CD8-positive, alpha-beta T cell (primary cell): ENCODE measurements at regions of chr9 and their contacts with region 1.

Region 1: GRCh38 chr9:130682490-130683121 is 11.0 kb upstream of the EXOSC2 start:
- DNase-seq: peak in 8 of 9 experiments; percentile 42 to 74 (median 60)
- ATAC-seq: peak; percentile 37
- H3K4me3 ChIP-seq: peak overlapping the region; percentile 61 to 63
- H3K4me3 Mint-ChIP-seq: peak overlapping the region; percentile 92
- H3K27ac ChIP-seq: no peak overlapping the region
- H3K27ac Mint-ChIP-seq: no peak overlapping the region
- H3K4me1 ChIP-seq: peaks cover 8% of the 10 kb centered on the region
- H3K4me1 Mint-ChIP-seq: peaks cover 2% of the 10 kb centered on the region
- H3K27me3 ChIP-seq: peaks cover 5 to 7% of the 10 kb centered on the region in 2 experiments
- H3K27me3 Mint-ChIP-seq: peaks cover 13% of the 10 kb centered on the region
- CTCF ChIP-seq: peak; percentile 88

Region 2: DNA sequence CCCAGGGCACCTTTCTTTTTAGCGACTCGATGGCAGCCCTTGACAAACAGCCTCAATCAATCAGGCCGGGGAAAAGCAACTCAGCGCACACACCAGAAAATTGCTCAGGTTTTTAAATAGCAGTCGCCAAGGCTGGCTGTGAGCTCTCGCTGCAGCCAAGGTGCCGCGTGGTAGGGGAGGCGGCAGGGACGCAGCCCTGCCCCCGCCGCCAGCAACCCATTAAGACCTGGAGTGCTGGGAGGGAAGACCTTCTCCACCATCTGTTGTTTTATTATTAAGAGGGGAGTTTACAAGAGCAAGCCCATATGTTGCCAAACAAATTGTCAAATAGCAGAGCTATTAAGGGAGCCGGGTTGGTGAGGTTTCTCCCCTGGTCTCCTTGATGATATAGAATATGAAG is 215.2 kb before region 1 on chr9:
- CTCF ChIA-PET with region 1: interaction called, 101 read pairs
- POLR2A ChIA-PET with region 1: no interaction called
- intact Hi-C with region 1: no loop called
- DNase-seq: no peak
- ATAC-seq: no peak
- H3K4me3 ChIP-seq: no peak overlapping the region
- H3K4me3 Mint-ChIP-seq: no peak overlapping the region
- H3K27ac ChIP-seq: no peak overlapping the region
- H3K27ac Mint-ChIP-seq: no peak overlapping the region
- H3K4me1 ChIP-seq: no peaks in the 10 kb centered on the region
- H3K4me1 Mint-ChIP-seq: no peaks in the 10 kb centered on the region
- H3K27me3 ChIP-seq: peaks cover 3 to 8% of the 10 kb centered on the region in 2 experiments
- H3K27me3 Mint-ChIP-seq: peaks cover 37% of the 10 kb centered on the region
- CTCF ChIP-seq: no peak

Region 3: DNA sequence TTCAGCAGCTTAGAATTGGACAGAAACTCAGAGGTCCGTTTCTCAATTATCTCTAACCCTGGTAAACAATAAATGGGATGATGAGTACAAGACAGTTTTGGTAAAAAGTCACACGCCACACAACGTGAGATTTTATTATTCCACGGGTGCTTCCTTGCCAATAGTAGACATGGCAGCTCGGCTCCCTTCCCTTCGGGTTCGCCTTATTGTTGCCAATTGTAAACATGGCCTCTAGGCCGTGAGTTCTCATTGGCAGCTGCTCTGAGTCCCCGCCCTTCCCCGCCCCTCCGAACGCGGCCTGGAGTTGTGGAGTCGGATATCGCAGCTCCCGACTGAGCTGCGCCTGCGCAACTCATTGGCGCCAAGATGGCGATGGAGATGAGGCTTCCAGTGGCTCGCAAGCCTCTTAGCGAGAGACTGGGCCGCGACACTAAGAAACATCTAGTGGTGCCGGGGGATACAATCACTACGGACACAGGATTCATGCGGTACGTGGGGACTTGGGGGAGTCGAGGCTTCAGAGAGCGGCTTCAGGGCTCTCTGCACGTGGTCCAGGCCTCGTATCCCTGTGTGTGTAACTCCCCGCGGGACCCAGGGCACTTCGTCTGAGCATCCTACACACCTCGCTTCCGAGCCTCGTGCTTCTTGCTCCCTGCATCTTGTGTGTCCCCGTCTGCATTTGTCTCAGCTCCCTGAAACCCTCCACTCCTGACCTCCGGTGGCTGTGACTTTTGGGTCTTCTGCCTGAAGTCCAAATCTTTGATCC is 11.0 kb after region 1 on chr9 and contains the start of gene EXOSC2:
- CTCF ChIA-PET with region 1: interaction called, 18 read pairs
- POLR2A ChIA-PET with region 1: interaction called, 12 read pairs
- intact Hi-C with region 1: no loop called
- DNase-seq: peak; percentile 96 to 100 (median 97)
- ATAC-seq: peak; percentile 99
- H3K4me3 ChIP-seq: peak within 1 kb of the TSS; percentile 88 to 97
- H3K4me3 Mint-ChIP-seq: peak within 1 kb of the TSS; percentile 93
- H3K27ac ChIP-seq: peak within 1 kb of the TSS; percentile 73 to 78
- H3K27ac Mint-ChIP-seq: peak within 1 kb of the TSS; percentile 95
- H3K4me1 ChIP-seq: peaks cover 25% of the 10 kb centered on the region
- H3K4me1 Mint-ChIP-seq: peaks cover 39% of the 10 kb centered on the region
- H3K27me3 ChIP-seq: no peaks in the 10 kb centered on the region
- H3K27me3 Mint-ChIP-seq: no peaks in the 10 kb centered on the region
- CTCF ChIP-seq: no peak
- total RNA-seq, gene EXOSC2: 59.1 to 59.9 TPM

Region 4: GRCh38 chr9:130707225-130707976 is 24.8 kb after region 1 on chr9:
- CTCF ChIA-PET with region 1: interaction called, 29 read pairs
- POLR2A ChIA-PET with region 1: interaction called, 3 read pairs
- intact Hi-C with region 1: no loop called
- DNase-seq: peak; percentile 18 to 83 (median 77)
- ATAC-seq: peak; percentile 48
- H3K4me3 ChIP-seq: no peak overlapping the region
- H3K4me3 Mint-ChIP-seq: no peak overlapping the region
- H3K27ac ChIP-seq: no peak overlapping the region
- H3K27ac Mint-ChIP-seq: no peak overlapping the region
- H3K4me1 ChIP-seq: no peaks in the 10 kb centered on the region
- H3K4me1 Mint-ChIP-seq: peaks cover 3% of the 10 kb centered on the region
- H3K27me3 ChIP-seq: no peaks in the 10 kb centered on the region
- H3K27me3 Mint-ChIP-seq: no peaks in the 10 kb centered on the region
- CTCF ChIP-seq: peak; percentile 93

Region 5: DNA sequence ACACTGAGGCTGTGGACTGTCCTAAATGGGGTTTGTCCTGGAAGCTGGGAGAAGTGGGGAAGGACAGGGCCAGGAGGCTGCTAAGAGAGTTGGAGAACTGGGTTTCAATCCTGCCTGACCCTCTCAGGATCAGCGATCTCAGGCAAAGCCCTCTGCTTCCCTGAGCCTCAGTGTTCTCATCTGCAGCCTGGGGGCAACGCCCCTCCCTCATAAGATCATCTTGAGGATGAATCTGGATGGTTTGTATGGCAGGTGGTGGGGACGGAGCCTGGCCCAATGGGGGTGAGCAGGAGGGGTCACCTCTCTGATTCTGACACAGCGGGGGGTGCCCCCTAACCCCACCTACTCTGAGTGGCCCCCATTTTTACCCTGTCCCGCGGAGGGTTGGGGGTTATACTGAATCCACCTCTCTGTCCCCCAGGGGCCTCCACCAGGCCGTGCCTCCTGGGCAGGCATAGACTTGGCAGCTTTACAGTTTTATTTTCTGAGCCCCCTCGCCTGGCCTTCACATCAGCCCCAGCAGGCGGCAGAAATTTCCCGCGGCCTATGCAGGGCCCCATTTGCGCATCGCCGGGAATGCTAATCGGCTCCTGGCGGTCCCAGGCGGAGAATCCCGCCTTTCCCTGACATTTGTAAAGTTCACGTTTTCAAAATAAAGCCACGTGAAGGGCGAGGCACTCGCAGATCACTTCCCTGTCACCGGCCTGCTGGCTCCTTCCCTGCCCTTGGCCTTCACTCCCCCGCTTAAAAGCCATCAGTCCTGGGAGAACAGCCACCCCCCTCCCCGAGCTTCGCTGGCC is 308.6 kb after region 1 on chr9:
- CTCF ChIA-PET with region 1: no interaction called
- POLR2A ChIA-PET with region 1: no interaction called
- intact Hi-C with region 1: no loop called
- DNase-seq: no peak
- ATAC-seq: no peak
- H3K4me3 ChIP-seq: no peak overlapping the region
- H3K4me3 Mint-ChIP-seq: no peak overlapping the region
- H3K27ac ChIP-seq: no peak overlapping the region
- H3K27ac Mint-ChIP-seq: no peak overlapping the region
- H3K4me1 ChIP-seq: peaks cover 13% of the 10 kb centered on the region
- H3K4me1 Mint-ChIP-seq: peaks cover 7% of the 10 kb centered on the region
- H3K27me3 ChIP-seq: no peaks in the 10 kb centered on the region
- H3K27me3 Mint-ChIP-seq: no peaks in the 10 kb centered on the region
- CTCF ChIP-seq: no peak